ENCODE measurements at regions of chr22 and their contacts with region 1.

Region 1: DNA sequence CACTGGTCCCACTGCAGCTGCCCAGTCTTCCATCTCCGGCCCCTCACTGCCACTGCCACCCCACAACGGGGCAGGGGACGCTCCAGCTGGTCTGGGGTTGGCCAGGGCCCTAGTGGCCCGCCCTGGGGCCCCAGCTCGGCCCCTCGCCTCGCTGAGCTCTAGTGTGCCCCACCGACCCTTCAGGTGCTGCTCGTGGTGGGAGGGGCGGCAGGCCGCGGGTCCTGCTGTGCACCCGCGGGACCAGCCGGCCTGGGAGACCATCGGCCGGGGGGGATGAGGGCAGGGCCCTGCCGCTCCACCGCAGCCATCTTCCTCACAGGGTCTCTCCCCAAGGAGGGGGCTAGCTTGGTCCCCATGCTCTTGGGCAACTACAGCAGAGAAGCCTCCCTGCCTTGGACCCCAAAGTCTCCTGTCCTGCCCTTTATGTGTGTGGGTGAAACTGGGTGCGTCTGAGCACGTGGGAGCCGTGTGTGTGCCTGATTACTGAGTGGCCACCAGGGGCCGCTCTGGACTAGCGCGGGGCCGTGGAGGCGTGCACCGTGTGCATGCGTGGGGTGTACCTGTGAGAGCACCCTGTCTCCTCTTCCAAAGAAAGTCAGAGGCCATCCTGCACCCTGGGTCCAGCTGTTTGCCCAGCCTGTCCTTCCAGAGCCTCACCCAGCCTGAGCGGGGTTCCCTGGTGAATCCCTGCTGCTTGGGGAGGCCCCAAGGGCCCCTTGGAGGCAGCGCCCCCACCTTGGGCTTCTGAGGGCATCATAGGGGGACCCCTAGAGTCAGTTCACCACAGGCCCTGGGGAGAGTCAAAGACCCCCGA is 6.0 kb upstream of the ACR start:
- DNase-seq: no peak
- H3K4me3 ChIP-seq: no peak overlapping the region
- H3K27me3 ChIP-seq: peaks cover 7% of the 10 kb centered on the region
- CTCF ChIP-seq: peak; percentile 92

Region 2: GRCh38 chr22:50641696-50642607 is 90.1 kb before region 1 on chr22:
- CTCF ChIA-PET with region 1: no interaction called
- POLR2A ChIA-PET with region 1: no interaction called
- DNase-seq: no peak
- H3K4me3 ChIP-seq: no peak overlapping the region
- H3K27me3 ChIP-seq: peaks cover 28% of the 10 kb centered on the region
- CTCF ChIP-seq: peak; percentile 43

Region 3: DNA sequence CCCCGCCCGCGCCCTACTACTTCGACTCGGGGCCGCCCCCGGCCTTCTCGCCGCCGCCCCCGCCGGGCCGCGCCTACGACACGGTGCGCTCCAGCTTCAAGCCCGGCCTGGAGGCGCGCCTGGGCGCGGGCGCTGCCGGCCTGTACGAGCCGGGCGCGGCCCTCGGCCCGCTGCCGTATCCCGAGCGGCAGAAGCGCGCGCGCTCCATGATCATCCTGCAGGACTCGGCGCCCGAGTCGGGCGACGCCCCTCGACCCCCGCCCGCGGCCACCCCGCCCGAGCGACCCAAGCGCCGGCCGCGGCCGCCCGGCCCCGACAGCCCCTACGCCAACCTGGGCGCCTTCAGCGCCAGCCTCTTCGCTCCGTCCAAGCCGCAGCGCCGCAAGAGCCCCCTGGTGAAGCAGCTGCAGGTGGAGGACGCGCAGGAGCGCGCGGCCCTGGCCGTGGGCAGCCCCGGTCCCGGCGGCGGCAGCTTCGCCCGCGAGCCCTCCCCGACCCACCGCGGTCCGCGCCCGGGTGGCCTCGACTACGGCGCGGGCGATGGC is 11.6 kb before region 1 on chr22:
- CTCF ChIA-PET with region 1: interaction called, 10 read pairs
- POLR2A ChIA-PET with region 1: no interaction called
- DNase-seq: no peak
- H3K4me3 ChIP-seq: no peak overlapping the region
- H3K27me3 ChIP-seq: peaks cover 9% of the 10 kb centered on the region
- CTCF ChIP-seq: no peak